H1 (cell line): ENCODE measurements at regions of chr7 and their contacts with region 1.

Region 1: GRCh38 chr7:1883031-1883761 is 213.1 kb downstream of the ELFN1 start:
- DNase-seq: peak in 1 of 2 experiments; percentile 60
- H3K4me3 ChIP-seq: no peak overlapping the region
- H3K27ac ChIP-seq: no peak overlapping the region
- H3K4me1 ChIP-seq: peaks cover 0 to 6% (median under 1%) of the 10 kb centered on the region in 4 experiments; a peak in 1 of 7 replicates
- H3K27me3 ChIP-seq: no peaks in the 10 kb centered on the region
- CTCF ChIP-seq: no peak
- EP300 ChIP-seq: no peak
- POLR2A ChIP-seq: no peak
- RAD21 ChIP-seq: no peak

Region 2: GRCh38 chr7:1787241-1787640 is 96.0 kb before region 1 on chr7:
- CTCF ChIA-PET with region 1: no interaction called
- POLR2A ChIA-PET with region 1: no interaction called
- DNase-seq: no peak
- H3K4me3 ChIP-seq: no peak overlapping the region
- H3K27ac ChIP-seq: no peak overlapping the region
- H3K4me1 ChIP-seq: no peaks in the 10 kb centered on the region
- H3K27me3 ChIP-seq: no peaks in the 10 kb centered on the region
- CTCF ChIP-seq: peak; percentile 27 to 31 (median 28); a peak in 3 of 4 replicates
- EP300 ChIP-seq: no peak
- POLR2A ChIP-seq: no peak
- RAD21 ChIP-seq: peak in 1 of 2 experiments; percentile 28; a peak in 2 of 4 replicates

Region 3: DNA sequence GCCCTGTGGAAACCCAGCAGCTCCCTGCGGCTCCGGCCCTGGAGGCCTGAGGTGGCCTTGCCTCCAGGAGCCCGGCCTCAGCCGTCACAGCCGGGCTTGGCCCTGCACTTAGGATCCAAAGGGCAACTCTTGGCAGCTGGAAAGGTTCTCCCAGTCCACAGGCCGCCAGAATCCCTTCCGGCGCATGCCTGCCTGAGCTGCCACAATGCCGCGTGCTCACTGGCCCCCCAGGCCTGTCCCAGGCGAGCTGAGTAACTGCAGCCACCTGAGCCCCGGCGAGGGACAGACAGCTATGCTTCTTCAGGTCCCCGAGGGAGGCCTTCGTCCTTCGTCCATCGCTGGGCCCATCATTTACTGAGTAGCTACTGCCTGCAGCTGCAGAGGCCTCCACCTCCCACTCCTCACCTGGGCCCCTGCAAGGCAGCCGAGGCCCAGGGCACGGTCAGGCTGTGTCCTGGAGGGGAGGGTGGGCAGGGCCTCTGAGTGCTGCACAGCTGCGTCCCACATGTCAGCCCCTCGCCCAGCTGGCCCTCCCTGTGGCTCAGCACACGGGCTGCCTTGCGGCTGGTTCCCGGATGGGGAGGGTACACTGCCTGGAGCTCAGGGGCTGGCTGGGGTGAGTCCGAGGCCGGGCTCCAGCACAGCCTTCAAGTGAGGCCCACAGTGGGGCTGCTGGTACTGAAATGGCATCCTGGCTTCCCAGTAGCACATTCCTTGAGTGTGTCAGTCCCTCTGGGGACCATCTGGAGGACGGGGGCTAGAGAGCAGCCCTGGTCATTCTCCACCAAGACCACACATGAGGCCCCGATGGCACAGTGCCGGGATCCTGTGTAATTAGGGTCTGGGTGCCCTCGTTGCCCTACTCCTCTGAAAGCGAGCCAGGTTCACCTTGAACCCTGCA is 40.6 kb before region 1 on chr7:
- CTCF ChIA-PET with region 1: interaction called, 10 read pairs
- POLR2A ChIA-PET with region 1: interaction called, 3 read pairs
- DNase-seq: no peak
- H3K4me3 ChIP-seq: no peak overlapping the region
- H3K27ac ChIP-seq: no peak overlapping the region
- H3K4me1 ChIP-seq: no peaks in the 10 kb centered on the region; a peak in 1 of 7 replicates
- H3K27me3 ChIP-seq: no peaks in the 10 kb centered on the region
- CTCF ChIP-seq: peak in 2 of 3 experiments; percentile 18 to 25; a peak in 2 of 4 replicates
- EP300 ChIP-seq: no peak
- POLR2A ChIP-seq: no peak
- RAD21 ChIP-seq: peak in 1 of 2 experiments; percentile 27; a peak in 1 of 4 replicates

Region 4: GRCh38 chr7:1861799-1862458 is 21.3 kb before region 1 on chr7:
- CTCF ChIA-PET with region 1: interaction called, 16 read pairs
- POLR2A ChIA-PET with region 1: interaction called, 3 read pairs
- DNase-seq: no peak
- H3K4me3 ChIP-seq: no peak overlapping the region
- H3K27ac ChIP-seq: no peak overlapping the region
- H3K4me1 ChIP-seq: peaks cover 0 to 7% (median 4%) of the 10 kb centered on the region in 4 experiments; a peak in 4 of 7 replicates
- H3K27me3 ChIP-seq: no peaks in the 10 kb centered on the region
- CTCF ChIP-seq: no peak
- EP300 ChIP-seq: no peak
- POLR2A ChIP-seq: no peak
- RAD21 ChIP-seq: no peak

Region 5: GRCh38 chr7:1867409-1868260 is 15.6 kb before region 1 on chr7:
- CTCF ChIA-PET with region 1: interaction called, 16 read pairs
- POLR2A ChIA-PET with region 1: interaction called, 3 read pairs
- DNase-seq: no peak
- H3K4me3 ChIP-seq: no peak overlapping the region
- H3K27ac ChIP-seq: no peak overlapping the region
- H3K4me1 ChIP-seq: peaks cover 0 to 7% (median 4%) of the 10 kb centered on the region in 4 experiments; a peak in 4 of 7 replicates
- H3K27me3 ChIP-seq: no peaks in the 10 kb centered on the region
- CTCF ChIP-seq: no peak
- EP300 ChIP-seq: no peak
- POLR2A ChIP-seq: no peak
- RAD21 ChIP-seq: no peak

Region 6: DNA sequence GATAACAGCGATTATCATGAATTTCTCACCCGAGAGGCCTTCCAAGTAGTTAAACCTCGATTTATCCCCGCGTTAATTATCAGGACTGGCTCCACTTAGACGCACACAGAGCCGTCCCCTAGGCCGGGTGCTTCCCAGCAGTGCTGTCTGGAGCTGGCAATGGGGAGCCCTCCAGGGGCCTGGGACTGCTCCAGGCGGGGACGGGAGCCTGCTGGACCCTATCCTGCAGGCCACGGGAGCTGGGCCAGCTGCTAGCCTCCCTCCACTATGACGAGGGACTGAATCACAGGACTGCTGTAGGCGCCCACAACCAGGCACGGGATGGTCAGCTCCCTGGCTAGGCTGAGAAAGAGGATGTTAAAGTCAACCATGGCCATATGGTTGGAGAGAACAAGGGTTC is 16.0 kb after region 1 on chr7:
- CTCF ChIA-PET with region 1: interaction called, 49 read pairs
- POLR2A ChIA-PET with region 1: no interaction called
- DNase-seq: no peak
- H3K4me3 ChIP-seq: no peak overlapping the region
- H3K27ac ChIP-seq: no peak overlapping the region
- H3K4me1 ChIP-seq: 0 out of 7 replicates have a peak, but pooled peaks cover 0 to 2% (median 0%) of the 10 kb centered on the region in 4 experiments
- H3K27me3 ChIP-seq: no peaks in the 10 kb centered on the region
- CTCF ChIP-seq: no peak
- EP300 ChIP-seq: no peak
- POLR2A ChIP-seq: no peak
- RAD21 ChIP-seq: no peak

Region 7: GRCh38 chr7:1906087-1906830 is 23.1 kb after region 1 on chr7:
- CTCF ChIA-PET with region 1: interaction called, 21 read pairs
- POLR2A ChIA-PET with region 1: no interaction called
- DNase-seq: no peak
- H3K4me3 ChIP-seq: no peak overlapping the region
- H3K27ac ChIP-seq: no peak overlapping the region; the same call in 1 of the 2 replicates
- H3K4me1 ChIP-seq: no peaks in the 10 kb centered on the region
- H3K27me3 ChIP-seq: no peaks in the 10 kb centered on the region
- CTCF ChIP-seq: no peak
- EP300 ChIP-seq: no peak
- POLR2A ChIP-seq: no peak
- RAD21 ChIP-seq: no peak

Region 8: DNA sequence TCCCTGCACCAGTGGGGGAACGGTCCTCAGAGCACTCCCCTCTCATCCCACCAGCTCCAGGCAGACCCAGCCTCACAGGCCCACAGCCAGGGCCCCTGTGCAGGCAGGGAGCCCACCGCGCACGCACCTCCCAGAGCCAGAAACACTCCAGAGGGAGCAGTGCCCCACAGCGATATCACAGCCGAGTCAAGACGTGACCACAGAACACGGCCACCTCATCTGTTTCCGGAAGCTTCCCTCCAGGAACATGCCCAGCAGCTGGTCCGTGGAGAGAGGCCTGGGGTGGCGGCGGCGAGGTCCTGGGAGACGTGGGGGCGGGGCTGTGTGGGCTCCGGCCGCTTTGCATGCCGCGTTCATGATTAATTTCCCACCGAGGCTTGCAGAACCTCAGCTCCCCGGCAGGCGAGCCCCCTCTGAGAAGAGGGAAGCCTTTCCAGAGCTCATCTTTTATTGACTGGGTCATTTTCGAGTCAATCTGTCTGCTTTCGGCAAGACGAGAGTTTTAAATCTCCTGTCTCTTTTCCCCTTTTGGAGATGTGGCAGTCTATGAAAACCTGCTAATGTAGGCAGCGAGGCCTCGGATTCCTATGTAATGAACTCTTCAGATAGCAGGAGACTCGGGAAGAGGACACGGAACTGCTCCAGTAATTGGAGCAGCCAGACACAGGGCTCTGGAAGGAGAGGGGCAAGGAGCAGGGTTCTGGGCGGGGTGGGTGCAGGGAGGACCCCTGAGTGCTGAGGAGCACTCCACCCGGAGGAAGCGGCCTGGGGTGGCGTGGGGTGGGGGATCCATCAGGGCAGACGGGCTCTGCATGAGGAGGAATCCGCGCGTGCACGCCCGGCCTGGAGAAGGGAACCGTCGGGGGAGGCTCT is 29.6 kb after region 1 on chr7:
- CTCF ChIA-PET with region 1: interaction called, 21 read pairs
- POLR2A ChIA-PET with region 1: no interaction called
- DNase-seq: no peak
- H3K4me3 ChIP-seq: no peak overlapping the region
- H3K27ac ChIP-seq: no peak overlapping the region
- H3K4me1 ChIP-seq: no peaks in the 10 kb centered on the region; a peak in 1 of 7 replicates
- H3K27me3 ChIP-seq: no peaks in the 10 kb centered on the region
- CTCF ChIP-seq: no peak
- EP300 ChIP-seq: no peak
- POLR2A ChIP-seq: no peak
- RAD21 ChIP-seq: no peak